Head of caudate nucleus (tissue), 42 donors: ENCODE measurements at regions of chr1 and their contacts with region 1.

Region 1: GRCh38 chr1:153796791-153797659 is 21.8 kb downstream of the SLC27A3 start:
- DNase-seq: peak; percentile 50 to 94 (median 80)

Region 2: DNA sequence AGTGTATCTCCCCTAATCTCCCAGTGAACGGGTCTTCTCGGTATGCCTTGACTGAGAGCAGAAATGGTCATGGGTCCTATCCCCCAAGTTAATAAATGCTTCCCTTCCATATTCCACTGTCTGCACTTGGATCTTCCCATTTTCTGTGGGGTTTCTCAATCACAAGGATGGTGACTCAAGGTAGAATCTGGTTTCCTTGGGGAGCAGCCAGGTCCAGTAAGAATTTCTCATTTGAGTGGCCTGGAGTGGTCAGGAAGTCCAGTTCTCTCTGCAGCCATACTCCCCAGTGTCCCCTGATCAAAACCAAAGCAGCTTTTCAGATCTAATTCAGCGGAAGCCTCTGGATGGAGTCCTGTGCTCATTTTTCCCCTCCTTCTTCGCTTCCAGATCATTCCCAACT is 36.6 kb before region 1 on chr1:
- intact Hi-C with region 1: no loop called
- DNase-seq: no peak

Region 3: DNA sequence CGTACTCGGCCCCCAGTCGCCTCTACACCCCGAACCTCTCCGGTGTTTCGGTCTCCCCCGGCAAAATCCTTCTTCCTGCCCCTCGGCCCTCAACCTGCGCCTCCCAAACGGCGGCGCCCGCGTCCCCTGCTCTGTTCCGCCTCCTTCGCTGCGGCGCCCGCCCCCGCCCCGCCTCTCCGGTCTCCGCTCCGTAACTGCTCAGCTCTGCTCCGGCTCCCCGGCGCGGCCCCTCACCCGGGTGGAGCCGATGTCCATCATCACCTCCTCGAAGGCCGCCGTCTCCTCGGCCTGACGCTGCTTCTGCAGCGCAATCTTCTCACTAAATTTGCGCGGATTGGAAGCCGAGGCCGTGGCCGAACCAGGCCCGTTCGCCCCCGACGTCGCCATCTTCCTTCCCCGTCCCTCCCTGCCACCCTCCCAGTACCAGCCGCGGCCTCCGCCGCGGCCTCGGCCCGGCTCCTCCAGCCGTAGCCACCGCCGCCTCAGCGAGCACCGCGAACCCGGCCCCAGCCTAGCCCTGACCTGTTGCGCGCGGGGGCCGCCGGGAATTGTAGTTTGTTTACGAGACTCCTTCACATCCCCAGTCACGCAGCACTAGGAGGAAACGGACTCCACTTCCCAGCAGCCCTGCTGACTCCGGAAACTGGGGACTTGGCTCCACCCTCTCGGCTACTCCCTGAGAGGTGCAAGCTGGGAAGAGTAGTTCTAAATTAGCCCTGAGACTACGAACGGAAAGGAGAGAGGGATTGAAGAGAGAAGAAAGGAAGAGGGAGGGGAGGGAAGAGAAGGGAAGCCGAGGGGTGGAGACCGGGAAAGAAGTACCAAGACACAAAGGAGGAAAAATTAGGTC is 161.3 kb after region 1 on chr1 and contains the start of gene CRTC2:
- intact Hi-C with region 1: loop called (anchors 10 kb)
- DNase-seq: peak; percentile 98 to 100 (median 99)